ENCODE measurements at regions of chr1 and their contacts with region 1.

Region 1: DNA sequence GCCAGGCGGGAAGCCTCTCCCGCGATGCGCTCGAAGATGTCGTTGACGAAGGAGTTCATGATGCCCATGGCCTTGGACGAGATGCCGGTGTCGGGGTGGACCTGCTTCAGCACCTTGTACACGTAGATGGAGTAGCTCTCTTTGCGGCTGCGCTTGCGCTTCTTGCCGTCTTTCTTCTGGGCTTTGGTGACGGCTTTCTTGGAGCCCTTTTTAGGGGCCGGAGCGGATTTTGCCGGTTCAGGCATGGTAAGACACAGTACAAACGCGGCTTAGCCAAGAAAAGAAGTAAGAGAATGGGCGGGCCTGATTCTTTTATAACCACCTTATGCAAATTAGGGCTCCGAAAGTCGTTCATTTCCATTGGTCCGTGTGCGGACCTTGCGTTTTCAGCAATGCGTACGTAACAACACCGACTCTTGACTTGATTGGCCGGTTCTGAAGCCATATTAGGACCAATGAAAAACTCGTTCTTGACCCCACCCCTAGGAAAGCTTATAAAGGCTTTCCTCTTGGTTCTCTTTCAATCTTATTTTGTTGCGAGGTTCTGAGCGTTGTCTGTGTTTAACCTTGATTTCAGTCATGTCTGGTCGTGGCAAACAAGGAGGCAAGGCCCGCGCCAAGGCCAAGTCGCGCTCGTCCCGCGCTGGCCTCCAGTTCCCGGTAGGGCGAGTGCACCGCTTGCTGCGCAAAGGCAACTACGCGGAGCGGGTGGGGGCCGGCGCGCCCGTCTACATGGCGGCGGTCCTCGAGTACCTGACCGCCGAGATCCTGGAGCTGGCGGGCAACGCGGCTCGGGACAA is 12.8 kb upstream of the BOLA1 start:
- DNase-seq: peak; percentile 51 to 97 (median 93)
- ATAC-seq: peak; percentile 69 to 73
- H3K4me3 Mint-ChIP-seq: no peak overlapping the region
- H3K27ac Mint-ChIP-seq: no peak overlapping the region
- H3K4me1 Mint-ChIP-seq: peaks cover 9 to 16% (median 11%) of the 10 kb centered on the region in 4 donors
- H3K27me3 Mint-ChIP-seq: no peaks in the 10 kb centered on the region

Region 2: GRCh38 chr1:149899460-149900293 is 13.1 kb after region 1 on chr1 and contains the start of gene BOLA1:
- POLR2A ChIA-PET with region 1: interaction called, 88 read pairs
- DNase-seq: peak; percentile 66 to 89 (median 76)
- ATAC-seq: peak; percentile 98 to 99
- H3K4me3 Mint-ChIP-seq: peak within 1 kb of the TSS; percentile 85 to 96 (median 94)
- H3K27ac Mint-ChIP-seq: peak within 1 kb of the TSS; percentile 89 to 98 (median 96)
- H3K4me1 Mint-ChIP-seq: peaks cover 6 to 26% (median 17%) of the 10 kb centered on the region in 4 donors
- H3K27me3 Mint-ChIP-seq: peaks cover 0 to 2% (median 0%) of the 10 kb centered on the region in 5 donors
- polyA plus RNA-seq, gene BOLA1: 19.7 to 34.1 (median 24.3) TPM

Region 3: GRCh38 chr1:149927503-149928387 is 41.1 kb after region 1 on chr1 and contains the start of gene SF3B4:
- POLR2A ChIA-PET with region 1: interaction called, 84 read pairs
- DNase-seq: peak; percentile 90 to 97 (median 95)
- ATAC-seq: peak; percentile 95 to 97
- H3K4me3 Mint-ChIP-seq: peak within 1 kb of the TSS; percentile 89 to 97 (median 92)
- H3K27ac Mint-ChIP-seq: peak within 1 kb of the TSS; percentile 96 to 99 (median 98)
- H3K4me1 Mint-ChIP-seq: peaks cover 30 to 63% (median 47%) of the 10 kb centered on the region in 4 donors
- H3K27me3 Mint-ChIP-seq: peaks cover 0 to 16% (median 5%) of the 10 kb centered on the region in 5 donors
- polyA plus RNA-seq, gene SF3B4: 55.7 to 90.4 (median 71.9) TPM

Region 4: GRCh38 chr1:149977345-149977744 is 90.7 kb after region 1 on chr1:
- POLR2A ChIA-PET with region 1: no interaction called
- DNase-seq: no peak
- ATAC-seq: no peak
- H3K4me3 Mint-ChIP-seq: no peak overlapping the region
- H3K27ac Mint-ChIP-seq: no peak overlapping the region
- H3K4me1 Mint-ChIP-seq: peaks cover 0 to 19% (median 7%) of the 10 kb centered on the region in 4 donors
- H3K27me3 Mint-ChIP-seq: peaks cover 0 to 13% (median 0%) of the 10 kb centered on the region in 5 donors

Region 5: GRCh38 chr1:150022357-150022756 is 135.8 kb after region 1 on chr1:
- POLR2A ChIA-PET with region 1: no interaction called
- DNase-seq: no peak
- ATAC-seq: peak in 1 of 2 donors; percentile 30
- H3K4me3 Mint-ChIP-seq: no peak overlapping the region
- H3K27ac Mint-ChIP-seq: no peak overlapping the region
- H3K4me1 Mint-ChIP-seq: no peaks in the 10 kb centered on the region
- H3K27me3 Mint-ChIP-seq: peaks cover 0 to 38% (median 1%) of the 10 kb centered on the region in 5 donors

Region 6: DNA sequence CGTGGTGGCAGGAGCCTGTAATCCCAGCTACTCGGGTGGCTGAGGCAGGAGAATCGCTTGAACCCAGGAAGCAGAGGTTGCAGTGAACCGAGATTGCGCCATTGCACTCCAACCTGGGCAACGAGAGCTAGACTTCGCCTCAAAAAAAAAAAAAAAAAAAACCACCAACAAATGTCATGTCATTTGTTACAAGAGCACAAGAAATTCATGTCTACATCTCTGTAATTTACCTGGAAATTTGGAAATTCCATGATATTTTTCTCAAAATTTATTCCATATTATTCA is 164.4 kb after region 1 on chr1:
- POLR2A ChIA-PET with region 1: interaction called, 12 read pairs
- DNase-seq: no peak
- ATAC-seq: no peak
- H3K4me3 Mint-ChIP-seq: no peak overlapping the region
- H3K27ac Mint-ChIP-seq: no peak overlapping the region
- H3K4me1 Mint-ChIP-seq: peaks cover 0 to 8% (median 3%) of the 10 kb centered on the region in 4 donors
- H3K27me3 Mint-ChIP-seq: peaks cover 0 to 10% (median 4%) of the 10 kb centered on the region in 5 donors

Region 7: GRCh38 chr1:150156868-150157603 is 270.4 kb after region 1 on chr1:
- POLR2A ChIA-PET with region 1: interaction called, 29 read pairs
- DNase-seq: no peak
- ATAC-seq: no peak
- H3K4me3 Mint-ChIP-seq: peak overlapping the region in 1 of 10 donors; percentile 52
- H3K27ac Mint-ChIP-seq: peak overlapping the region in 9 of 10 donors; percentile 29 to 99 (median 70)
- H3K4me1 Mint-ChIP-seq: peaks cover 51 to 90% (median 72%) of the 10 kb centered on the region in 4 donors
- H3K27me3 Mint-ChIP-seq: no peaks in the 10 kb centered on the region

Region 8: GRCh38 chr1:150363426-150364230 is 477.0 kb after region 1 on chr1 and contains the start of gene RPRD2:
- POLR2A ChIA-PET with region 1: interaction called, 15 read pairs
- DNase-seq: peak; percentile 94 to 100 (median 100)
- ATAC-seq: peak; percentile 89 to 92
- H3K4me3 Mint-ChIP-seq: peak within 1 kb of the TSS; percentile 86 to 100 (median 98)
- H3K27ac Mint-ChIP-seq: peak within 1 kb of the TSS; percentile 95 to 100 (median 98)
- H3K4me1 Mint-ChIP-seq: peaks cover 16 to 34% (median 31%) of the 10 kb centered on the region in 4 donors
- H3K27me3 Mint-ChIP-seq: no peaks in the 10 kb centered on the region
- polyA plus RNA-seq, gene RPRD2: 22.5 to 40.5 (median 31.6) TPM

Measured in naive thymus-derived CD8-positive, alpha-beta T cell (primary cell).